ENCODE measurements at regions of chr10 and their contacts with region 1.

Region 1: GRCh38 chr10:77970869-77971803 is 44.6 kb upstream of the DLG5 start:
- DNase-seq: peak; percentile 95
- H3K4me3 ChIP-seq: peak overlapping the region; percentile 53
- H3K27ac ChIP-seq: peak overlapping the region; percentile 76
- H3K4me1 ChIP-seq: peaks cover 16% of the 10 kb centered on the region
- H3K27me3 ChIP-seq: no peaks in the 10 kb centered on the region

Region 2: GRCh38 chr10:77857254-77857653 is 113.9 kb before region 1 on chr10:
- in situ Hi-C with region 1: loop called (anchors 10 kb)
- DNase-seq: no peak
- H3K4me3 ChIP-seq: no peak overlapping the region
- H3K27ac ChIP-seq: no peak overlapping the region
- H3K4me1 ChIP-seq: no peaks in the 10 kb centered on the region
- H3K27me3 ChIP-seq: no peaks in the 10 kb centered on the region